ENCODE measurements at regions of chr17 and their contacts with region 1.

Region 1: DNA sequence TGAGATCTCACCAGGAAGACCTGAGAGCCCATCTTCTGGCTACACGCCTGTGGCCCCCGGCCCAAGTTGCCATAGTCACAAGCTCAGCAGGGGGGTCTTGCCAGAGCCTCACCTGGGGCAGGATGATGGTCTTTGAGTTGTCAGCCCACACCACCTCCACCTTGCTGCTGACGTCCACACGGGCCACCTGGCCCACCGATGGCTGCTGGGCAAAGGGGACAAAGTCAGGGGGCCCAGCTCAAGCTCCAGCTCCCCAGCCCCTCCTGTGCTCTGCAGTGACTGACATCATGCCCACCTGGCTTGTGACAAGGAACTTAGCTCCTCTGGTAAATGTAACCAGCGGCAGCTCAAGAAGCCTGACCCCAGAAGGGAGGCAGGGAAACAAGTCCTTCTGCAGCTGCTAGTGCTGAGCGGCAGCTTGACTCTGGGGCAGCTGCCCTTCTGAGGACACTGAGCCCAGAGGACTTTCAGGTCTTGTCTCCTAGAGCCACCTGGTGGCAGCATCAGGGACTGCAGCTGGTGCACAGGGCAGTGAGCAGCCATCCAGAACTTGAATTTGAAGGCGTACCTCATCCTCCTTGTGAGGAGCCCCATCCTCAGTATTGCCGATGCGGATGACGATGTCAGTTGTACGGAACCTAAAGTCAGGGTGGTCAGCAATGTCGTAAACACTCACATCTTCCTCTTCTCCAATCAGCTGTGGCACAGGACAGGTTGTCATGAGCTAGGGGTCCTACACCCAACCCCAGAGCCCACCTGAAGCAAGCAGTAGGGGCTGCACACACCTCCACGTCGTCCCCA is 13.5 kb downstream of the SPHK1 start:
- DNase-seq: peak; percentile 70
- H3K4me3 ChIP-seq: no peak overlapping the region
- H3K27ac ChIP-seq: no peak overlapping the region
- H3K4me1 ChIP-seq: peaks cover 28% of the 10 kb centered on the region
- H3K27me3 ChIP-seq: no peaks in the 10 kb centered on the region
- CTCF ChIP-seq: peak; percentile 97

Region 2: DNA sequence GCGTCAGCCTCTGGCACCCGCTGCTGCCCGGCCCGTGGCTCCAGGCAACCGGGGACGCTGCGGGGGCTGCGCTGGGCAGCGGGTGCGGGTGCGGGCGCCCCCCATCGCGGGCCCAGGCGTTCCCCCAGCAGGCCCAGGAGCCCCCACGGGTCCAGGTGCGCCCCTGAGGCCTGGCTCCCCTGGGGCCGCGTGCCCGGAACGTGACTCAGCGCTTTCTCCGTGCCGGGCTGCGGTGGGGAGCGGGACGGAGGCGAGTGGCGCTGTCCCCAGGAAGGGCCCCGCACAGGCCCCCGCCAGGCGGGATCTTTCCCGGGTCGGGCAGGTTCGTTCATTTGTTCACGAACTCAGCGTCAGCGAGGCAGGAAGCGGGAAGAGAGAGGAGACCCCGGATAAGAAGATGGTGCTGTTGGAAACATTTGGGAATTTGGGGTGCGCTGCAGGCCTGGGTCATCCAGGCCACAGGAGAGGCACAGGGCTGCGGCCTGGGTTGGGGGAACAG is 275.9 kb before region 1 on chr17:
- CTCF ChIA-PET with region 1: no interaction called
- dilution Hi-C with region 1: no loop called
- in situ Hi-C with region 1: no loop called
- intact Hi-C with region 1: loop called (anchors 10 kb)
- DNase-seq: no peak
- H3K4me3 ChIP-seq: peak overlapping the region in 1 of 3 experiments; percentile 18
- H3K27ac ChIP-seq: no peak overlapping the region
- H3K4me1 ChIP-seq: no peaks in the 10 kb centered on the region
- H3K27me3 ChIP-seq: no peaks in the 10 kb centered on the region
- CTCF ChIP-seq: no peak

Region 3: DNA sequence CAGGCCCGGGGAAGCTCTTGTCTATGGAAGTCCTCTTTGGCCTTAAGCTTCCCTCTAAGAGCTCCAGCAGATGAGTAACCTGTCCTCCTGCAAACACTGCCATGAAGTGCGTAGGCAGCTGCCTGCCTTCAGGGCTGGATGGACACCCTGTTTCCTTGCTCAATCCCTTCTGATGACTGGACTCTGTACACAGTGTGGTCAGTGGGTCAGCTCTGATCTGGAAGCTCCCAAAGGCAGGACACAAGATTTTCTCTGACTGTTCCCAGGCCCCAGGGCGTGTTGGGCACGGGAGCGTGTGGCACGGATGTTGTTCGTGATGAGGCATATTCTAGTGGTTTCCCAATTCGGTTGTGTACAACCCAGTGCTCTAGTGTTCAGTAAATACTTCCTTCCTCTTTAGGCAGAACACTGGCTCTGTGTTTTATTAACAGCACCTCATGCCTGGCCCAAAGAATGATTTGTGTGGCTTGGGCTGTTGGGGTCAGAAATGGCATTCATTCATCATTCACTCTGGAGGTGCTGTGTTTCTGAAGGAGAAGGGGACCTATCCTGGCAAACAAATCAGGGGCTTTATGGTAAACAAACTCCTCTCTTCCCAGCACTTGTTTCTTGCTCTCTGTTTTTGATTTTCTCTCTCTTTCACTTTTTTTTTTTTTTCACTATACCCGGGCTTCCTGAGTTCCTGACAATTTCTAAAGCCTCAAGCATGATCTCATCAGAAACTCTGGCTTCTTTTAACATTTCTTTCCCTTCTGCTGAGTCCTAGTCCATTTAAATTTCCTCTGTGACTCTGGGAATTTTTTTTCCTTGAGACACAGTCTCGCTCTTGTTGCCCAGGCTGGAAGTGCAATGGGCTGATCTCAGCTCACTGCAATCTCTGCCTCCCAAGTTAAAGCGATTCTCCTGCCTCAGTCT is 145.6 kb before region 1 on chr17:
- CTCF ChIA-PET with region 1: no interaction called
- dilution Hi-C with region 1: no loop called
- in situ Hi-C with region 1: no loop called
- intact Hi-C with region 1: no loop called
- DNase-seq: peak; percentile 100
- H3K4me3 ChIP-seq: no peak overlapping the region
- H3K27ac ChIP-seq: peak overlapping the region; percentile 38
- H3K4me1 ChIP-seq: peaks cover 20% of the 10 kb centered on the region
- H3K27me3 ChIP-seq: no peaks in the 10 kb centered on the region
- CTCF ChIP-seq: no peak

Region 4: GRCh38 chr17:76307299-76307965 is 90.5 kb before region 1 on chr17:
- CTCF ChIA-PET with region 1: no interaction called
- dilution Hi-C with region 1: no loop called
- in situ Hi-C with region 1: loop called (anchors 5 kb)
- intact Hi-C with region 1: loop called (anchors 1 kb)
- DNase-seq: no peak
- H3K4me3 ChIP-seq: no peak overlapping the region
- H3K27ac ChIP-seq: no peak overlapping the region
- H3K4me1 ChIP-seq: no peaks in the 10 kb centered on the region
- H3K27me3 ChIP-seq: no peaks in the 10 kb centered on the region
- CTCF ChIP-seq: no peak

Region 5: DNA sequence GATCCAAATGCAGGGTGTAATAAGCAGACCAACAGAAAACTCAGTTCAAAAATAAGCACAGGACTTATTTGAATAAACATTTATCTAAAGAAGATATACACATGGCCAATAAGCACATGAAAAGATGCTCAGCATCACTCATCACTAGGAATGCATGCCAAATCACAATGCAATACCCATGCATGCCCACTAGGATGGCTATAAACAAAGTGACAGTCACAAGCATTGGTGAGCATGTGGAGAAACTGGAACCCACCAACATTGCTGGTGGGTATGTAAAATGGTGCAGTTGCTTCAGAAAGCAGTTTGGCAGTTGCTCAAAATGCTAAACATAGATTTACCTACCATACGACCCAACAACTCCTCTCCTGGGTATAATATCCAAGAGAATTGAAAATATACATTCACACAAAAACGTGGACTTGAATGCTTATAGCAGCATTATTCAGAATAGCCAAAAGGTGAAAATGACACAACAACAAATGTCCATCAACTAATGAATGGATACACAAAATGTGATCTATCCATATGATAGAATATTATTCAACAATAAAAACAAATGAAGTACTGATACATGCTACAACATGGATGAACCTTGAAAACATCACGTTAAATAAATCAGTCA is 34.9 kb after region 1 on chr17:
- CTCF ChIA-PET with region 1: no interaction called
- dilution Hi-C with region 1: loop called (anchors 5 kb)
- in situ Hi-C with region 1: no loop called
- intact Hi-C with region 1: no loop called
- DNase-seq: no peak
- H3K4me3 ChIP-seq: no peak overlapping the region
- H3K27ac ChIP-seq: no peak overlapping the region
- H3K4me1 ChIP-seq: peaks cover under 1% of the 10 kb centered on the region
- H3K27me3 ChIP-seq: no peaks in the 10 kb centered on the region
- CTCF ChIP-seq: peak; percentile 52 to 59

Region 6: DNA sequence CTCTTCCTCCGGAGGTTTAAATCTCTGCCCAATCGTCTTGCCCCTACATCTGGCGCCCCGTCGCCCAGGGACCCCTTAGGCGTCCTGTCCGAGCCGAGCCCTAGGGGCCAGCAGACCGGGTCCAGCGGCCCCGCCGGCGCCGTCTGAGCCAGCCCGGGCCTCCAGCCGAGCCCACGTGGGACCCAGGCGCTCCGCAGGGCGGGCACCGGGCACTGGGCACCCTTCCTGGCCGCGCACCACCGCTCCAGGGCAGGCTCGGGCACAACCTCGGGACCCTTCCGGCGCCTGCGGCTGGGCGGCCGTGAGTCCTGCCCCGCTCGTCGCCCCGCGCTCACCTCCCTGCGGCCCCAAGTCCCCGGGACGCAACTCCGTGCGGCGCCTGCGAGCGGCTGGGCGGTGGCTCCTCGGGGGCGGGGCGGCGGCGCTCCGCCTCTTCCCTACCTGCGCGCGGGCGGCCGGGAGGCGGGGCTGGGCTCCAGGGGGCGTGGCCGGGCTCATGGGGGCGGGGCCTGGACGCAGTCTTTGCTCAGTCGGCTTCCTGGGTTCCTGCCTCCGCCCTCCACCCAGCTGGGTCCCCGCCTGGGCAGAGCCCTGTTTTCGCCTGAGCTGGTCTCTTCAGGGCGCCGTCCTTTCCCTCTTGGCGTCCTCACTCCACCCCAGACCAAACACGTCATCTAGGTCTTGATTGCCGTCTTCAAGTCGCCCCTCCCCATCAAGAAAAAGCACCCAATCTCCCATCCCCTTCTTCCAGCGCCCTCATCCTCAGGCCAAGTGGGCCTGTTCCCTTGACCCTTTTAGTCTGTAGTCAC is 103.3 kb after region 1 on chr17 and contains the start of gene RHBDF2:
- CTCF ChIA-PET with region 1: no interaction called
- dilution Hi-C with region 1: loop called (anchors 10 kb)
- in situ Hi-C with region 1: loop called (anchors 5 to 10 kb)
- intact Hi-C with region 1: no loop called
- DNase-seq: peak; percentile 85
- H3K4me3 ChIP-seq: peak within 1 kb of the TSS; percentile 86 to 94 (median 90)
- H3K27ac ChIP-seq: peak within 1 kb of the TSS; percentile 70
- H3K4me1 ChIP-seq: peaks cover 34% of the 10 kb centered on the region
- H3K27me3 ChIP-seq: no peaks in the 10 kb centered on the region
- CTCF ChIP-seq: no peak
- total RNA-seq, gene RHBDF2: 22.0 to 51.3 TPM